Posterior cingulate gyrus (tissue), 11 donors: ENCODE measurements at regions of chr2 and their contacts with region 1.

Region 1: DNA sequence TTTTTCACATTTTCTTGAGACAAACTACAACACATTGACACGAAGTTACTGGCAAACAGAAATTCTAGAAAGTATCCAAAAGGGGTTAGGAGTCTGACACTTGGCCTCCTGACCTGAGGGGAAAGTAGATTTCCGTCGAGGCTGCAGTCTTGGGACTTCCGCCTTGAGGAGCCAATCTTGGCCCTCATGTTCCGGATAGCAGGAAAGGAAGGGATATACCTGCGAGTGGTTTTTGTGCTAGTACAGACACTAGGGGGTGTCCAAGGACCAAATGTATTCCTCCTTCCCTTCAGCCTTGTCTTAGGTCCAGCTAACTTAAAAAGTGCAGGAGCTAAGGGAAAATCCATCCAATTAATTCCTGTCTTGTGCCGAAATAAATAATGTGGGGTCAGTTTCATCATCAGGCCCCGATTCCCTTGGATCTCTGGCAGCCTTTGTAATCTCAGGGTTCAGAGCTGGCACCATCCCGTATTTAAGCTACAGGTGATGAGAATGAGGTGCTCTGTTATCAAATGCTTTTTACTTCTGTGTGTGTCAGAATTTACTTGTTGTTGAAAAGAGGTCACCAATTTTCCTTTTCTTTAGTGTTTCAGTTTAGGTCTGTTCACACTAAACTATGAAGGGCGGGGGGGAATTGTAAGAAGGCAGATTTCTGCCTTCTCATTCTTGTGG is 330.2 kb upstream of the FANCL start:
- DNase-seq: peak in 2 of 10 donors; percentile 12 to 25

Region 2: GRCh38 chr2:58710795-58711279 is 139.5 kb after region 1 on chr2:
- intact Hi-C with region 1: no loop called
- DNase-seq: peak in 2 of 10 donors; percentile 65 to 70

Region 3: DNA sequence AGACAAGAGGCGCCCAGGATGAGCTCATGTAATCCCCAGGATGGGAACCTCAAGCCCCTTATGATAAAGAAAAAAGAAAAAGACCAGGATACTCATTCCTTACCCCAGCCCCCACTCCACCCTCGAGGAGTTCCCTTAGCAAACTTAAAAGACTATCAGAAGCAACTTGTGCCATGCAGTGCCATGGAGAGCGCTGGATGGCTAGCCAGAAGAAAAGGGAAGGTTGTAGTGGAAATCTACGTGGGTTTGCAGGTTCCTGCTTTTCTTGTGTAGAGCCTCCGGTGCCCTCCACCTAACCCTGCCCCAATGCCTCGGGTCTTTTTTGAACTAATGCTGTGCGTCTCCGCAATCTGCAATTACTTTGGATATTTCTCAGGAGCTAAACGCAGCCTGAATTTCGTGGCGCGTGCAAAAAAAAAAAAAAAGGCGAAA is 1998.4 kb after region 1 on chr2:
- intact Hi-C with region 1: loop called (anchors 10 kb)
- DNase-seq: peak in 2 of 10 donors; percentile 14 to 54